Motor neuron (in vitro differentiated cells): ENCODE measurements at regions of chr5 and their contacts with region 1.

Region 1: GRCh38 chr5:95846554-95847260 is 24.2 kb upstream of the GLRX start:
- ATAC-seq: peak; percentile 74 to 99 (median 87)
- H3K4me3 ChIP-seq: no peak overlapping the region
- H3K27ac ChIP-seq: no peak overlapping the region
- H3K4me1 ChIP-seq: no peaks in the 10 kb centered on the region

Region 2: GRCh38 chr5:95631991-95632675 is 214.6 kb before region 1 on chr5:
- in situ Hi-C with region 1: loop called in 3 of 9 experiments (anchors 10 to 25 kb)
- ATAC-seq: peak in 2 of 8 experiments; percentile 73 to 84
- H3K4me3 ChIP-seq: no peak overlapping the region
- H3K27ac ChIP-seq: no peak overlapping the region
- H3K4me1 ChIP-seq: no peaks in the 10 kb centered on the region

Region 3: DNA sequence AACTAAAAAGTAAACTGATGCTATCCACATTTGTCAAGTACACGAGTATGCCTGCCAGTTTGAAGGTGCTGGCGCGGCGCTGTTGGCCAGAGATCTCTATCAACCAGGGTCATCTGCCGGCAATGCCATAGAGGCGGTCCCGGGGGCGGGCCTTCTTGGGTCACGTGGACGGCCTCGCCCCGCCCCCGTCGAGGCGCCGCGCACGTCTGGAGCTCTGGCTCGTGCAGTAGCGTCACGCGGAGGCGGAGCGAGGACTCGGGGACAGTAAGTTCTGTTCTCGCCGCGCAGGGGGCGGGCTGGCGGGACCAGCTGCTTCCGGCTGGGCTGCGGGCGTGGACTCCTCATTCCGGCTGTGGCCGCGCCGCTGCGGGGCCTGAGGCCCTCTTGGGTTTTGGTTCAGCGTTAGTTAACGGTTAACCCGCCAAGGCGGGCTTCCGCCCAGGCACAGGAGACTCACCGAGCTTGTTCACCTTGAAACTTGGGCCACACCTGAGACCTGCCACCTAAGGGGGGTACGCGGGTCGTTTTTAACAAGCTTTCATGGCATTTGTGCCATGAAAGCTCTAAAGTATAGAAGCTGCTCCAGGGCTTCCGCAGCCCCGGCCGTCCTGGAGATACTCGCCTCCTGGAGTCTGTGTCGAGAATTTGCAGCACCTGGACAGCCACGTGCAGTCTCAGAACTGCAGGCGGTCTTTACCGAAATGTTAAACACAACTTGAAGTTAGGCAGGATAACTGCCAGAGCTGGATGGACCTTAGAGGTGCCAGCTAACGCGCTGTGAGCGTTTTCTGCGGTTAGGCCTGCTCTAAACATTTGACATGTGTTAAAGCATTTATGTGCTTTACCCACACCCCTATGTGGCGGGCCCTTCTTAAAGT is 199.9 kb before region 1 on chr5 and contains the start of gene RFESD:
- in situ Hi-C with region 1: loop called in 4 of 9 experiments (anchors 10 to 25 kb)
- ATAC-seq: peak; percentile 97 to 100 (median 100)
- H3K4me3 ChIP-seq: peak within 1 kb of the TSS; percentile 39 to 54 (median 47)
- H3K27ac ChIP-seq: peak within 1 kb of the TSS; percentile 46 to 70
- H3K4me1 ChIP-seq: peaks cover 0 to 8% of the 10 kb centered on the region in 2 donors
- total RNA-seq, gene RFESD: 1.1 to 6.7 (median 2.7) TPM

Region 4: GRCh38 chr5:95655575-95655974 is 191.1 kb before region 1 on chr5:
- in situ Hi-C with region 1: loop called in 2 of 9 experiments (anchors 10 to 25 kb)
- ATAC-seq: peak in 2 of 8 experiments; percentile 40 to 48
- H3K4me3 ChIP-seq: no peak overlapping the region
- H3K27ac ChIP-seq: no peak overlapping the region
- H3K4me1 ChIP-seq: no peaks in the 10 kb centered on the region

Region 5: GRCh38 chr5:95664204-95664786 is 182.4 kb before region 1 on chr5:
- in situ Hi-C with region 1: loop called in 2 of 9 experiments (anchors 10 to 25 kb)
- ATAC-seq: peak in 3 of 8 experiments; percentile 22 to 52 (median 27)
- H3K4me3 ChIP-seq: no peak overlapping the region
- H3K27ac ChIP-seq: no peak overlapping the region
- H3K4me1 ChIP-seq: no peaks in the 10 kb centered on the region

Region 6: GRCh38 chr5:96017951-96018350 is 171.2 kb after region 1 on chr5:
- in situ Hi-C with region 1: no loop called
- ATAC-seq: peak in 3 of 8 experiments; percentile 45 to 68 (median 63)
- H3K4me3 ChIP-seq: no peak overlapping the region
- H3K27ac ChIP-seq: no peak overlapping the region
- H3K4me1 ChIP-seq: no peaks in the 10 kb centered on the region

Region 7: GRCh38 chr5:96094904-96095303 is 248.2 kb after region 1 on chr5:
- in situ Hi-C with region 1: no loop called
- ATAC-seq: no peak
- H3K4me3 ChIP-seq: no peak overlapping the region
- H3K27ac ChIP-seq: no peak overlapping the region
- H3K4me1 ChIP-seq: no peaks in the 10 kb centered on the region